ENCODE measurements at regions of chr14 and their contacts with region 1.

Region 1: GRCh38 chr14:73173092-73173735 is 36.9 kb downstream of the PSEN1 start:
- DNase-seq: peak; percentile 18 to 60
- ATAC-seq: peak; percentile 70 to 71
- H3K4me3 ChIP-seq: no peak overlapping the region
- H3K27ac ChIP-seq: no peak overlapping the region
- H3K4me1 ChIP-seq: no peaks in the 10 kb centered on the region
- CTCF ChIP-seq: peak; percentile 84
- EP300 ChIP-seq: no peak
- POLR2A ChIP-seq: no peak
- RAD21 ChIP-seq: peak; percentile 82 to 85

Region 2: DNA sequence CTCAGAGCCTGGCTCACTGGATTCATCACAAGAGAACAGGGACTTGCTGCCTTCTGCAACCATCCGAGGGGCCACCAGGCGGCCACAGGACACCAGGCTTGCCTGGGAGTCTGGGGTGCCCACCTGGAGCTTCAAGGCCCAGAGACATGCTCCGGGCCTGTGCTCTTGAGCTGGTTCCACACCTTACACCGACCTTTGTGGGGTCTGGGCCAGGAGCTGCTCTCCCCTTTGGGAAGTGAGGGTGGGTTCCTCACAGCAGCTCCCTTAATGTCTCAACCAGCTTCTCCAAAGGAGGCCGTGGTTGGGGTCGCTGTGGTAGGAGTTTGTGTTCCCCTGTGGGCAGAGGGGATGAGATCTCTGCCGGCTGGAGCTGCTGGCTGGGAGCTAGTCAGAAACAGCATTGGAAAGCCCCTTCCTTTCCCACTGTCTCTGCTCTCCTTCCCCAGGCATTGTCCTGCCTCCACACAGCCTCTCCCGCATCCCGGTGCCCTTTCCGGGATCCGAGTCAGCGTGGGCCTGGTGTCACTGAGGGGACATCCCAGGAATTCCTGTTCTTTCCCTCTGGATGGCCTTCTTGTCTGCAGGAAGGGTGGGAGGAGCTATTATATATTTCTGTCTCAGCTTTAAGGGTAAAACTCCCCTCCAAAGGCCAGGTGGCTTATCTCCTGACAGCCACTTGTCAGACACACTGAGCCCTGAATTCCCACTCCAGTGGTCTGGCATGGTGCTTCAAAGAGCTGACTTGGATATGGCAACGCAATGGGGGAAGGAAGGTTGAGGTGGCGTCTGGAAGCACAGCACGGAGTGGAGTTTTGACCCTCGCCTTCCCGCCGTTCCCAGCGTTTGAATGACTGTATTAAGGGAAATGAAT is 59.0 kb after region 1 on chr14:
- CTCF ChIA-PET with region 1: interaction called, 12 read pairs
- POLR2A ChIA-PET with region 1: no interaction called
- DNase-seq: peak; percentile 73
- ATAC-seq: peak; percentile 52 to 70
- H3K4me3 ChIP-seq: no peak overlapping the region
- H3K27ac ChIP-seq: peak overlapping the region in 1 of 2 experiments; percentile 76; a peak in 4 of 6 replicates
- H3K4me1 ChIP-seq: peaks cover 61% of the 10 kb centered on the region
- CTCF ChIP-seq: peak; percentile 46
- EP300 ChIP-seq: no peak
- POLR2A ChIP-seq: no peak
- RAD21 ChIP-seq: peak; percentile 59 to 67

Region 3: GRCh38 chr14:73261520-73262426 is 88.6 kb after region 1 on chr14:
- CTCF ChIA-PET with region 1: interaction called, 11 read pairs
- POLR2A ChIA-PET with region 1: no interaction called
- DNase-seq: no peak
- ATAC-seq: peak in 1 of 2 experiments; percentile 12; a peak in 3 of 6 replicates
- H3K4me3 ChIP-seq: no peak overlapping the region
- H3K27ac ChIP-seq: no peak overlapping the region
- H3K4me1 ChIP-seq: no peaks in the 10 kb centered on the region
- CTCF ChIP-seq: no peak
- EP300 ChIP-seq: no peak
- POLR2A ChIP-seq: no peak
- RAD21 ChIP-seq: no peak

Region 4: DNA sequence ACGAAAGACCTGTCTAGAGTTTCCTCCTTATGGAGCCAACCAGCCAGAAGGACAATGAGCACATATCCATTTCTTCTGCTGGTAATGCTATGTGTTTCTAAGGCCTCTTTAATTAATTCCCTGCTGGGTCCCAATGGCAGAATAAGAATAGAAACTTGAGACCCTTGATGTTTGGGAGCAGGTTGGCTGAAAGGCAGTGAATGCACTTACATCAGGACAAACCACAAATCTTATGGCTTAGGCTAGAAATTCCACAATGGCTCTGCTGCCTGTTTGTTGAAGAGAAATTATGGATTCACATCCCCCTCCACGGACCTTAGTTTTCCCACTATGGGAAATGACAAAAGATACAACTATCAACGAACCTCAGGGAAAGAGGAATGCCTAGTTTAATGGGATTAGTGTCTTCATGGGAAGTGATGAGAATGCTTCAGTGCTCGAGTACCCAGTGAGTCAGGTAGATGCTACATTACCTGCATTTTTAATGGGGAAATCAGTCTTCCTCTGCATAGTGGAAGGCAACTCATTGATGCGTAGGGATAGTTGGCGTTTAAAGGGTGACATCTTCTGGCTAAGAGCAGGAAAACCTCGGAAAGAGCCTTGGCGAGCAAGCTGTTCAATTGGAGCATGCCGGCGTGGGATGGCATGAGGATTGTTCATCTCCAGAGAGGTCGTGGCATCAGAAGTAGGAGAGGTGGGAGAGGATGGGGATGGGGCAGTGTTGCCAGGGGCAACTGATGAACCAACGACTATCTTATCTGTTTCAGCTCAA is 110.6 kb after region 1 on chr14:
- CTCF ChIA-PET with region 1: interaction called, 20 read pairs
- POLR2A ChIA-PET with region 1: no interaction called
- DNase-seq: peak in 1 of 2 experiments; percentile 46
- ATAC-seq: peak; percentile 57 to 77; a peak in 5 of 6 replicates
- H3K4me3 ChIP-seq: no peak overlapping the region
- H3K27ac ChIP-seq: no peak overlapping the region
- H3K4me1 ChIP-seq: 0 out of 3 replicates have a peak, but pooled peaks cover 5% of the 10 kb centered on the region
- CTCF ChIP-seq: peak; percentile 43
- EP300 ChIP-seq: no peak
- POLR2A ChIP-seq: no peak
- RAD21 ChIP-seq: peak; percentile 51 to 69

Region 5: DNA sequence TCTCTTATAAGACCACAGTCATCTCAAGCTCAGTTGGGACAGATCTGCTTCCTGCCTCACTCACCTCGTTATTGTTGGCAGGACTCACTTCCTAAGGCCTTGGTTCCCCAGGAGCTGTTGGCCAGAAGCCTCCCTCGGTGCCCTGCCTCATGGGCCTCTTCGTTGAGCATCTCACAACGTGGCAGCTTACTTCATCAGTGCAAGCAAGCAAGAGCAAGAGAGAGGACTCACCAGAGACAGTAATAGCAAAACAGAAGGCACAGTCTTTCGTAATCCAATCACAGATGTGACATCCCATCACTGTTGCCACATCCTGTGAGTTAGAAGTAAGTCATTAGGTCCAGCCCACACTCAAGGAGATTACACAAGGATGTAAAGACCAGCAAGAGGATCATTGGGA is 290.2 kb after region 1 on chr14:
- CTCF ChIA-PET with region 1: interaction called, 14 read pairs
- POLR2A ChIA-PET with region 1: no interaction called
- DNase-seq: peak in 1 of 2 experiments; percentile 52
- ATAC-seq: no peak
- H3K4me3 ChIP-seq: no peak overlapping the region
- H3K27ac ChIP-seq: peak overlapping the region in 1 of 2 experiments; percentile 84; a peak in 3 of 6 replicates
- H3K4me1 ChIP-seq: peaks cover 71% of the 10 kb centered on the region
- CTCF ChIP-seq: no peak
- EP300 ChIP-seq: no peak
- POLR2A ChIP-seq: no peak
- RAD21 ChIP-seq: no peak